ENCODE measurements at regions of chr14 and their contacts with region 1.

Region 1: DNA sequence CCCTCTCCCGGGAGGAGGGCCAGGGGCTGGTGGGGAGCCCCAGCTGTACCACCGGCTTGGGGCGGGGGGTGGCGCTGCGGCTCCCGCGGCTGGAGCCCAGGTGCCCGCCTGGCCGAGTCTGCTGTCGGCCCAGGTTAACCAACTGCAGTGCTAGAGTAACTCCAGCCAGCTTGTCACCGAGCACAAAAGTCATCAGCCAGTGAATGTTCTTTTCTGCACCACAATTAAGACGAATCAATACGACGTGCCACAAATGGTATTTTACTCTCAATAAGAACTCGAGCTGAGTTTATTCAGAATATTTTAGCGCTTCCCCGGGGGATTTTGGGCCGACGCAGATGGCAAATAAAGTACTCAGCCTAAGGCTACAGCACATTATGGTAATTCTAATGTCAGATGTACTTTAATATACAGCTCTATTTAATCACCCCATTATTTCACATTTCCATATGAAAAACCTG is 83.2 kb downstream of the BCL11B start:
- DNase-seq: no peak
- H3K4me3 Mint-ChIP-seq: peak overlapping the region; percentile 81
- H3K27ac Mint-ChIP-seq: peak overlapping the region; percentile 95
- H3K4me1 Mint-ChIP-seq: peaks cover 94% of the 10 kb centered on the region
- H3K27me3 Mint-ChIP-seq: no peaks in the 10 kb centered on the region

Region 2: GRCh38 chr14:99271951-99272631 is 83.3 kb after region 1 on chr14 and contains the start of gene BCL11B:
- CTCF ChIA-PET with region 1: interaction called, 18 read pairs
- POLR2A ChIA-PET with region 1: interaction called, 5 read pairs
- DNase-seq: peak; percentile 94
- H3K4me3 Mint-ChIP-seq: peak within 1 kb of the TSS; percentile 87
- H3K27ac Mint-ChIP-seq: peak within 1 kb of the TSS; percentile 99
- H3K4me1 Mint-ChIP-seq: peaks cover 31% of the 10 kb centered on the region
- H3K27me3 Mint-ChIP-seq: peaks cover 15% of the 10 kb centered on the region
- total RNA-seq, gene BCL11B: 115 to 116 TPM

Region 3: DNA sequence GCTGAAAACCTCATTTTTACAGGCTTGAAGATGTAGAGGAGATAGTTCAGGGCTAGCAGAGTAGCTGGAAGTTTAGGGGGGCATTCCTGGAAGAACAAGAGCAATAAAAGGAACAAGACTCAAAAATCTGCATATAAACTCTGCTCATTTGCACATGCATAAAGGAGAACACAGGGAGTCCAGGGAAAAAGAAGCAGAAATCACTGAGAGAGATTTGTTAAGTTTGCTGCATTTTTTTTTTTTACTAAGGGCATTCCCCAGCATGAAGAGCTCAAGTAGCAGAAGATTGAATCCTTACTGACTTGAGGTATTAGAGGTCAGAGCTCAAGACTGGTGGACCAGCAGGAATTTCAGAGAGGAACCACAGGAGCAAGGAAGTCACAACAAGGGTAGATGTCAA is 111.4 kb after region 1 on chr14:
- CTCF ChIA-PET with region 1: no interaction called
- POLR2A ChIA-PET with region 1: no interaction called
- DNase-seq: no peak
- H3K4me3 Mint-ChIP-seq: no peak overlapping the region
- H3K27ac Mint-ChIP-seq: no peak overlapping the region
- H3K4me1 Mint-ChIP-seq: no peaks in the 10 kb centered on the region
- H3K27me3 Mint-ChIP-seq: peaks cover 32% of the 10 kb centered on the region

Measured in activated CD4-positive, alpha-beta T cell treated with anti-CD3 and anti-CD28 coated beads, Interleukin-2, amount 10 ng/mL, durations not matched to agents 7 days and 5 days (primary cell).